Esophagus muscularis mucosa (tissue), 4 donors: ENCODE measurements at regions of chr4 and their contacts with region 1.

Region 1: DNA sequence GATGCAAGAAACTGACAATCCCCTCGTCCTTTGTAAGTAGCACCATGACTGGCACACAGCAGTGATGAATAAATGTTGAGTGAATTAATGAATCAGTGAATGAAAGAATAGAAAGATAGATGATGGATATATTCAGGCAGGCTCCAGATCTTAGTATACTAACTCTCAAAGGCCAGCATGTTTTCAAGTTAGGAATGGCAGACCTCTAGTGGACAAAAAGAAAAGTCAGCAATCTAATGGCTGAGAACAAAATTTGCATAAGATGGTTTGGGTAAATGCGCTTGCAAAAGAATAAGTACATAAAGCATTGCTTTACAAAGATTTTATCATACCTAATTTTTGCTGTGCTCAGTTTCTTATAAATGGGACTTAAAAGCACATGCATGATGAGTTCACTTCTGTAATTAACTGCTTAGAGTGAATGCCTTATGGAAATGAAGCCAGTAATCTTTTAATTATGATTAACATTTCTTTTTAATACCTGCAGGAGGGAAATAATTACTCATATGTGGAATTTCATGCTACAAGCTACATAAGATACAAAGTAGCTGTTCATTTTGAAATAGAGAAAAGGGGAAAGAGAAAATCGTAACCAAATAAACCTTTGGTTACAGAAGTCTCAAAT is 126.9 kb upstream of the GPRIN3 start:
- DNase-seq: no peak
- H3K4me3 ChIP-seq: no peak overlapping the region
- H3K27ac ChIP-seq: no peak overlapping the region
- H3K4me1 ChIP-seq: no peaks in the 10 kb centered on the region
- H3K27me3 ChIP-seq: no peaks in the 10 kb centered on the region
- CTCF ChIP-seq: peak; percentile 61 to 77 (median 70)
- EP300 ChIP-seq: no peak
- POLR2A ChIP-seq: no peak

Region 2: GRCh38 chr4:89164400-89164799 is 270.1 kb before region 1 on chr4:
- intact Hi-C with region 1: loop called (anchors 10 kb)
- DNase-seq: no peak
- H3K4me3 ChIP-seq: no peak overlapping the region
- H3K27ac ChIP-seq: no peak overlapping the region
- H3K4me1 ChIP-seq: no peaks in the 10 kb centered on the region
- H3K27me3 ChIP-seq: no peaks in the 10 kb centered on the region
- CTCF ChIP-seq: no peak
- EP300 ChIP-seq: no peak
- POLR2A ChIP-seq: no peak

Region 3: GRCh38 chr4:89226665-89227574 is 207.6 kb before region 1 on chr4:
- intact Hi-C with region 1: loop called (anchors 1 kb)
- DNase-seq: no peak
- H3K4me3 ChIP-seq: no peak overlapping the region
- H3K27ac ChIP-seq: no peak overlapping the region
- H3K4me1 ChIP-seq: peaks cover 0 to 5% (median 0%) of the 10 kb centered on the region in 4 donors
- H3K27me3 ChIP-seq: no peaks in the 10 kb centered on the region
- CTCF ChIP-seq: peak; percentile 74 to 80 (median 78)
- EP300 ChIP-seq: no peak
- POLR2A ChIP-seq: no peak

Region 4: DNA sequence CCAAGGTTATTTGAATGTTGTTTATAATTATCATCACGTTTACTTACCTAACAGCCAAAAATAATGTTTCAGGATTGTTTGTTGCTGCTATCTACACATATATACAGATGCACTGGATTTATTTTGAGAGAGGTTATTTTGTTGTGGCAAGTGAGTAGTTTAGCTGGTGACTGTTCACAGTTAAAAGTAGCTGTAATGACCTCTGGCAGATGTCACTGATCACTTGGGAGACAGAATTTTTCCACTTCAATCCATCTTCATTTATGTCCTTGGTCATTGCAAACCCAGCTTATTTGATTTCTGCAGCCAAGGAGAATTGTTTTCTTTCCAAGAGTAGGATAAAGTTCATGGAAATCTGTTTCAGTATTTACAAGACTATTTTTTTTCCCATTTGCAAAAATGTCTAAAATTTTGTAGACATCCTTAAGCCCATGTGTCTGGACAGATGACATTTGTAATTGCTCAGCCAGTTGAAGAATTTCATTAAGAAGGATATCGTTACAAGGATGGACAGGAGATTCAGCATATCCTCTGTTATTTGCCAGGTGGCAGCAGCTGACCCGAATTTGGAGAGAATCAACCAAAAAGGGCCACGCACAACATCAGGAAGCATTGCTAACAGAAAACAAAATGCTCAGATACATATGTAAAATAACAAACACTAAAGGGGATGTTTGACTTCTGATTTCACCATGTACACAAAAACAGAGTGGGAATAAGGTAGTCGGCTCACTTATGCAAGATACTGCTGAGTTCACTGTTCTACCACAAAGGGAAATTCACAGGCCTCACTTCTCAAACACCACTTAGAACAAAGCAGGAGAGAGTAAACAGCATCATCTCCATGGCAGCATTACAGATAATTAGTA is 191.4 kb before region 1 on chr4:
- intact Hi-C with region 1: loop called (anchors 5 kb)
- DNase-seq: no peak
- H3K4me3 ChIP-seq: no peak overlapping the region
- H3K27ac ChIP-seq: no peak overlapping the region
- H3K4me1 ChIP-seq: peaks cover 15 to 19% (median 18%) of the 10 kb centered on the region in 4 donors
- H3K27me3 ChIP-seq: no peaks in the 10 kb centered on the region
- CTCF ChIP-seq: no peak
- EP300 ChIP-seq: no peak
- POLR2A ChIP-seq: no peak